Naive thymus-derived CD4-positive, alpha-beta T cell (primary cell): ENCODE measurements at regions of chr15 and their contacts with region 1.

Region 1: DNA sequence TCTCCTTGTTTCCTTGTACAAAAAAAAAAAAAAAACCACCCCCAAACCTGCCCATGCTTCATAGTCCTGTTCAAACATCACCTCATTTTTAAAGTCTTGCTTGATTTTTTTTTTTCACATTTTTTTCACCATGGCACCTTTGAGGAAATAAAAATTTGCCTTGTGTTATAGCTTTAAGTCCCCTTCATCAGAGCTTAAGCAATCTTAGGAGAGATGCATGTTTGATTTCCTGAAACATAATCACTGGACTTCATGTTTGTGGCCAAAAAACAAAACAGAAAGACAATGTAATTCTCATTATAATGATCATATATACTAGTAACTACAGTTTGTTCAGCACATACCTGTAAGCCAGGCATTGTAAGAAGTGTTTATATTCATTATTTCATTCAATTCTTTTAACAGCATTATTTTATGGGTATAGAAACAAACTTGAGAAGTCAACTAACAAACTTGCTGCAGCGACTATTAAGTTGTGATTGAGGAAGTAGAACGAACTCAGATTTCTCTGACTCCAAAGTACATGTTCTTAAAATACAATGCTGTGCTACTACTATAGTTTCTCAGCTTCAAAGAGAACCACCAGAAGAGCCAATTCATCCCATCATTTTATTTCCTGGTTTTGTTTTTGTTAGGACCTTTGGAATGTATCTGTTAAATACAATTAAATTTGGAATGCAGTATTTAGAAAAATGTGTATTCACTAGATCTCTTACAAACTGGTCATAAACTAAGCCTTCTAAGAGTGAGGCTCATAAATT is 203.8 kb downstream of the TCF12 start:
- DNase-seq: no peak
- ATAC-seq: no peak
- H3K4me3 ChIP-seq: no peak overlapping the region
- H3K4me3 Mint-ChIP-seq: no peak overlapping the region
- H3K27ac ChIP-seq: no peak overlapping the region
- H3K27ac Mint-ChIP-seq: peak overlapping the region in 1 of 9 donors; percentile 21
- H3K4me1 ChIP-seq: no peaks in the 10 kb centered on the region
- H3K4me1 Mint-ChIP-seq: peaks cover 0 to 44% (median 23%) of the 10 kb centered on the region in 7 donors
- H3K27me3 ChIP-seq: no peaks in the 10 kb centered on the region
- H3K27me3 Mint-ChIP-seq: no peaks in the 10 kb centered on the region

Region 2: GRCh38 chr15:57079931-57080620 is 42.2 kb before region 1 on chr15:
- CTCF ChIA-PET with region 1: no interaction called
- POLR2A ChIA-PET with region 1: no interaction called
- intact Hi-C with region 1: loop called in 1 of 2 experiments (anchors 5 kb)
- DNase-seq: peak in 3 of 9 donors; percentile 2 to 8 (median 6)
- ATAC-seq: no peak
- H3K4me3 ChIP-seq: no peak overlapping the region
- H3K4me3 Mint-ChIP-seq: peak overlapping the region in 2 of 10 donors; percentile 23 to 30
- H3K27ac ChIP-seq: no peak overlapping the region
- H3K27ac Mint-ChIP-seq: peak overlapping the region in 2 of 9 donors; percentile 17 to 60
- H3K4me1 ChIP-seq: peaks cover 0 to 4% of the 10 kb centered on the region in 2 donors
- H3K4me1 Mint-ChIP-seq: peaks cover 20 to 57% (median 48%) of the 10 kb centered on the region in 7 donors
- H3K27me3 ChIP-seq: no peaks in the 10 kb centered on the region
- H3K27me3 Mint-ChIP-seq: no peaks in the 10 kb centered on the region

Region 3: GRCh38 chr15:57183041-57183440 is 60.8 kb after region 1 on chr15:
- CTCF ChIA-PET with region 1: no interaction called
- POLR2A ChIA-PET with region 1: no interaction called
- intact Hi-C with region 1: loop called in 1 of 2 experiments (anchors 10 kb)
- DNase-seq: no peak
- ATAC-seq: no peak
- H3K4me3 ChIP-seq: no peak overlapping the region
- H3K4me3 Mint-ChIP-seq: no peak overlapping the region
- H3K27ac ChIP-seq: no peak overlapping the region
- H3K27ac Mint-ChIP-seq: no peak overlapping the region
- H3K4me1 ChIP-seq: no peaks in the 10 kb centered on the region
- H3K4me1 Mint-ChIP-seq: peaks cover 0 to 11% (median 3%) of the 10 kb centered on the region in 7 donors
- H3K27me3 ChIP-seq: no peaks in the 10 kb centered on the region
- H3K27me3 Mint-ChIP-seq: no peaks in the 10 kb centered on the region